Caco-2 (cell line): ENCODE measurements at regions of chr10 and their contacts with region 1.

Region 1: DNA sequence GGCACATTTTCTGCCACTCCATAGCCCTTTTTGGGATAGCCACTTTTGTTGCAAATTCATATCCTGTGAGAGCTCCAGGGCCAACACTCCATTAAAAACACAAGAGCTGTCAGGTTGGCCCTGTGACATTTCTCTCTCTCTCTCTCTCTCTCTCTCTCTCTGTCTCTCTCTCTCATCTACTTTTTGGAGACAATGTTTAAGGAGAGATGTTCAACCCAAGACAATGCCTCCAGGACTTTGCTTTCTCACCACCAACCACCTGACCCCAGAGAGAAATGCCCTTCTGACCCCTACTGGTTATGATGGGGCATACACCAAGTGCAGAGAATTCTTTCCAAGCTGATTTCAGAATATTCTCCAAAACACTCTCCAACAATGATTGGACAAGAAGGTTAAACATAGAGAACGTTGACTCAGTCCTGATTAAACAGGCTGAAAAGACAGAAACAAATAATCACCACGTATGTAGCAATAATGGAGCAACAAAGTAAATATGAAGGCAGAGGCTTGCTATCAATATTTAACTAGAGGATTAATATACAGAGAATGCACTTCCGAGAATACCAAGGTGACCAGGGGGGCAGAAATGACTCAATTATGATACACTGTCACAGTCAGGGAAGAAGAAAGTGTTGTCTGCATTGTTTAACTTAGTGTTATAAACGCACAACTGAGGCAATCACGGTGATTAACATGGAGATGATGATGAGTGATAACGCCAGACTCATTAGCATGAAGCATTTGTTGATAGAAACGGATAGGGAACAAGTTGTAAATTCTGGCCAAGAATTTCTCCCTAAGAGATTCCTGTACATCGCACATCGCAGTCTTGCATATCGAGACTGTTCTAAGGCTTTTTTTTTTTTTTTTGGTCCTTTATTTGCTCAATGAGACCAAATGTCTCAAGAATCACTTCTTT is 178.5 kb downstream of the NRP1 start:
- DNase-seq: peak; percentile 81 to 88
- H3K4me3 ChIP-seq: no peak overlapping the region
- H3K4me3 Mint-ChIP-seq: peak overlapping the region; percentile 28
- H3K27ac Mint-ChIP-seq: peak overlapping the region; percentile 8
- H3K4me1 ChIP-seq: peaks cover 36% of the 10 kb centered on the region
- H3K4me1 Mint-ChIP-seq: peaks cover 11% of the 10 kb centered on the region
- H3K27me3 ChIP-seq: no peaks in the 10 kb centered on the region
- H3K27me3 Mint-ChIP-seq: no peaks in the 10 kb centered on the region
- CTCF ChIP-seq: peak; percentile 72 to 92

Region 2: DNA sequence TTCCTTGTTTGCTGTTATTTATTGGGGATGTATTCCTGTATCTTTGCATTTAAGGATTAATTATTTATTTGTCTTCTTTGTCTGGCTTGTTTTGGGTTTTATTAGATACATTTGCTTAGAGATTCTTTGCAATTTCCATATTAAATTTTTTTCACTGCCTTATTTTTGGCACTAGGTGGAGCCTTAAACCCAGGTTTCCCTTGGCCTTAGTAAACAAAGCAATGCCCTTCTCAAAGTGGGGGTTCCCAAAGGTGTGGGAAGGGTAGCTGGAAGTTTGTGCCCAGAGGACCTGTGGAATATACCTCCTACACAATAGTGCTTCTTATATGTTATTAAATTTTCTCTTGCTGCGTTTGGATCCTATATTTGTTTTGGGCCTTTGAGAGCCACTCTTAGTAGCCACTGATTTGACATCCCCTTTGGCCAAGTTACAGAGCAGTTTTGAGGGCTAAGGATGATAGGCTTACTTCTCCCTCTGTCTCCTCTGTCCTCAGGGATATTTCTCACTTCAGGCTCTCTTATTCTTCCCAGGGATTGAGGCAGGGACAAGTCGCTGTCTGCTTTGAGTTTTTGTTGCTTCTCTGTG is 360.3 kb before region 1 on chr10:
- CTCF ChIA-PET with region 1: no interaction called
- POLR2A ChIA-PET with region 1: no interaction called
- intact Hi-C with region 1: loop called (anchors 1 kb)
- DNase-seq: peak in 1 of 2 experiments; percentile 45
- H3K4me3 ChIP-seq: no peak overlapping the region
- H3K4me3 Mint-ChIP-seq: no peak overlapping the region
- H3K27ac Mint-ChIP-seq: no peak overlapping the region
- H3K4me1 ChIP-seq: no peaks in the 10 kb centered on the region
- H3K4me1 Mint-ChIP-seq: no peaks in the 10 kb centered on the region
- H3K27me3 ChIP-seq: no peaks in the 10 kb centered on the region
- H3K27me3 Mint-ChIP-seq: peaks cover 5% of the 10 kb centered on the region
- CTCF ChIP-seq: peak; percentile 75 to 95

Region 3: GRCh38 chr10:32958085-32959005 is 197.6 kb before region 1 on chr10 and contains the start of gene ITGB1:
- CTCF ChIA-PET with region 1: no interaction called
- POLR2A ChIA-PET with region 1: no interaction called
- intact Hi-C with region 1: loop called (anchors 1 kb)
- DNase-seq: peak; percentile 98 to 100
- H3K4me3 ChIP-seq: peak within 1 kb of the TSS; percentile 91
- H3K4me3 Mint-ChIP-seq: peak within 1 kb of the TSS; percentile 92
- H3K27ac Mint-ChIP-seq: peak within 1 kb of the TSS; percentile 99
- H3K4me1 ChIP-seq: peaks cover 49% of the 10 kb centered on the region
- H3K4me1 Mint-ChIP-seq: peaks cover 48% of the 10 kb centered on the region
- H3K27me3 ChIP-seq: no peaks in the 10 kb centered on the region
- H3K27me3 Mint-ChIP-seq: no peaks in the 10 kb centered on the region
- CTCF ChIP-seq: no peak
- total RNA-seq, gene ITGB1: 404 and 474 TPM in 2 replicates

Region 4: DNA sequence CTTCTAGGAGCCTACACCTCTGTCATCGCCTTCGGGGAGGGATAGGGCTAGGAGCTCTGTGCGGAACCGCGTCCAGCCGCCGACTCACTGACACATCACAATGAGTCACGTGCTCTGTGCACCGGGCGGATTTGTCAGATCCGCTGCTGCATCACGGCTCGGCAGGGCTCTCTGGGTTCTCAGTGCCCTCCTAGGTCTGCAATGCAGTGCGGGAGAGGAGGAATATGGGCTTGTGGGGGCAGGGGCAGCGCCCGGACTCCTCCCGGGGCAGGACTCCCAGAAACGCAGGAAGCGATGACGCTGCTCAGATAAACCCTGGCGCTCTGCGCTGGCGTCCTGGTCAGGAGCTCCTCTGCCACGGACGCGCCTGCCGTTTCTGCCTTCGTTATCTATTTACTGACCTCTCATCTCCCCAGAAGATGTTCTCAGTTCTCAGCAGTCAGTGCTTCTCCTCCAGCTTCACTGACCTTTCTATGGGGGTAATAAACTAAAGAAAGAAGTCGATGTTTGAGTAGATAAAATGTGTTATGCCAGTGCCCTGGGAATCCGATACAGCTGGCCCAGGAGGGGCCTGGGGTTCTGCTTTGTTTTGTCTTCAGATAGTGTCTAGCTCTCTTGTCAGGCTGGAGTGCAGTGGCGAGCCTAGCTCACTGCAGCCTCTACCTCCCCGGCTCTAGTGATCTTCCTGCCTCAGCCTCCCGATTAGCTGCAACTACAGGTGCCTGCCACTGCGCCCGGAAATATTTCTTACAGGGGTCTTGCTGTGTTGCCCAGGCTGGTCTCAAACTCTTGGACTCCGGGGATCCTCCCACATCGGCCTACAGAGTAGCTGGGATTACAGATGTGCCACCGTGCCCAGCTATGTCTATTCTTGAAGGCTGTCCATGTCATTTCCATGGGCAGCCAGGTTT is 175.2 kb before region 1 on chr10:
- CTCF ChIA-PET with region 1: no interaction called
- POLR2A ChIA-PET with region 1: no interaction called
- intact Hi-C with region 1: loop called (anchors 1 kb)
- DNase-seq: peak; percentile 92 to 96
- H3K4me3 ChIP-seq: peak overlapping the region; percentile 41
- H3K4me3 Mint-ChIP-seq: peak overlapping the region; percentile 94
- H3K27ac Mint-ChIP-seq: peak overlapping the region; percentile 97
- H3K4me1 ChIP-seq: peaks cover 42% of the 10 kb centered on the region
- H3K4me1 Mint-ChIP-seq: peaks cover 27% of the 10 kb centered on the region
- H3K27me3 ChIP-seq: no peaks in the 10 kb centered on the region
- H3K27me3 Mint-ChIP-seq: no peaks in the 10 kb centered on the region
- CTCF ChIP-seq: no peak

Region 5: DNA sequence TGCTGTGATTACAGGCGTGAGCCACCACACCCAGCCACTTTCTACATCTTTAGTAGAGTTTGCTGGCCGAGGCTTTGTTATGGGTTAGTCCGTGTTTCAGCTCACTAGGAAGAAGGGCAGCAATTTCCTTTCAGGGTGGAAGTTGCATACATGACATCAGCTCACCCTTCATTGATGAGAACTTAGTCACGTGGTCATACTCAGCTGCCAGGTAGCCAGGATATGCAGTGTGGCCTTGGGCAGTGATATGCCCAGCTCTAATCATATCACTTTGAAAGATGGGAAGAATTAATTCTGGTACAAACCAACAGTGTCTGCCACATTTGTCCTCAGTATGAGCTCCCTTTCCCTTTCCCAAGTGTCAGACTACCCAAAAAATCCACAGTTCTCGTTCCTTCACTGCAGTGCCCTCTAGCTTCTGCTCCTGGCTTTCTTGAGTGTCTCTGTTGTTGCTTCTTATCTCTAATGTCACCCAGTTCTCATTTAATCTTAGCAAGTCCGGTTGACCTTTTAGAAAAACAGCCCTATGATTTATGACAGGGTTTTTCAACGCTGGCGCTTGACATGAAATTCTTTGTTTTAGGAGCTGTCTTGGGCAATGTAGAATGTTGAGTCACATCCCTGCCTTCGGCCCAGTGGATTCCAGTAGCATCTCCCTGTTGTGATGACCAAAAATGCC is 89.3 kb before region 1 on chr10:
- CTCF ChIA-PET with region 1: no interaction called
- POLR2A ChIA-PET with region 1: interaction called, 5 read pairs
- intact Hi-C with region 1: loop called (anchors 5 kb)
- DNase-seq: peak; percentile 40 to 44
- H3K4me3 ChIP-seq: no peak overlapping the region
- H3K4me3 Mint-ChIP-seq: no peak overlapping the region
- H3K27ac Mint-ChIP-seq: no peak overlapping the region
- H3K4me1 ChIP-seq: peaks cover 10% of the 10 kb centered on the region
- H3K4me1 Mint-ChIP-seq: peaks cover 2% of the 10 kb centered on the region
- H3K27me3 ChIP-seq: no peaks in the 10 kb centered on the region
- H3K27me3 Mint-ChIP-seq: no peaks in the 10 kb centered on the region
- CTCF ChIP-seq: peak in 1 of 2 experiments; percentile 29

Region 6: GRCh38 chr10:33115738-33116719 is 40.0 kb before region 1 on chr10:
- CTCF ChIA-PET with region 1: interaction called, 6 read pairs
- POLR2A ChIA-PET with region 1: no interaction called
- intact Hi-C with region 1: loop called (anchors 1 kb)
- DNase-seq: peak; percentile 40 to 48
- H3K4me3 ChIP-seq: no peak overlapping the region
- H3K4me3 Mint-ChIP-seq: no peak overlapping the region
- H3K27ac Mint-ChIP-seq: no peak overlapping the region
- H3K4me1 ChIP-seq: no peaks in the 10 kb centered on the region
- H3K4me1 Mint-ChIP-seq: no peaks in the 10 kb centered on the region
- H3K27me3 ChIP-seq: no peaks in the 10 kb centered on the region
- H3K27me3 Mint-ChIP-seq: no peaks in the 10 kb centered on the region
- CTCF ChIP-seq: peak; percentile 57 to 60

Region 7: DNA sequence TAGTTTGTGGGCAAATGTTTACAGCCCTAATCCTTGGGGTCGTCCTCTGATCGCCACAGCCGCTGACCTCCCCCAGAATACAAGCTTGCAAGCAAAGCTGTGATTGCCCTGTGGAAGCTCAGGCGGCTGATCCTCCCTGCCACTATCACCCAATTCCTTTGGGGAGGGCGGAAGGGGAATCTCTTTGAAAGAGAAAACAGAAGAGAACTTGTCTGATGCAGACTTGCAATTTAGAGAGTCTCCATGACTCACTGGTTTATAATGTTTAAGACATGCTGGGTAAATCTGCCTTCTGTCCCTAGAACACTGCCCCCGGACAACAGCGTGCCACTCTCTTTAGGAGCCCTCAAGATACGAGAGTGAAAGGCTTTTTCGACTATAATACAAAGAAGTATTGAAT is 103.0 kb after region 1 on chr10:
- CTCF ChIA-PET with region 1: no interaction called
- POLR2A ChIA-PET with region 1: no interaction called
- intact Hi-C with region 1: loop called (anchors 1 kb)
- DNase-seq: no peak
- H3K4me3 ChIP-seq: no peak overlapping the region
- H3K4me3 Mint-ChIP-seq: no peak overlapping the region
- H3K27ac Mint-ChIP-seq: peak overlapping the region; percentile 55
- H3K4me1 ChIP-seq: peaks cover 42% of the 10 kb centered on the region
- H3K4me1 Mint-ChIP-seq: peaks cover 38% of the 10 kb centered on the region
- H3K27me3 ChIP-seq: no peaks in the 10 kb centered on the region
- H3K27me3 Mint-ChIP-seq: no peaks in the 10 kb centered on the region
- CTCF ChIP-seq: no peak